T-cell (primary cell): ENCODE measurements at regions of chr15 and their contacts with region 1.

Region 1: DNA sequence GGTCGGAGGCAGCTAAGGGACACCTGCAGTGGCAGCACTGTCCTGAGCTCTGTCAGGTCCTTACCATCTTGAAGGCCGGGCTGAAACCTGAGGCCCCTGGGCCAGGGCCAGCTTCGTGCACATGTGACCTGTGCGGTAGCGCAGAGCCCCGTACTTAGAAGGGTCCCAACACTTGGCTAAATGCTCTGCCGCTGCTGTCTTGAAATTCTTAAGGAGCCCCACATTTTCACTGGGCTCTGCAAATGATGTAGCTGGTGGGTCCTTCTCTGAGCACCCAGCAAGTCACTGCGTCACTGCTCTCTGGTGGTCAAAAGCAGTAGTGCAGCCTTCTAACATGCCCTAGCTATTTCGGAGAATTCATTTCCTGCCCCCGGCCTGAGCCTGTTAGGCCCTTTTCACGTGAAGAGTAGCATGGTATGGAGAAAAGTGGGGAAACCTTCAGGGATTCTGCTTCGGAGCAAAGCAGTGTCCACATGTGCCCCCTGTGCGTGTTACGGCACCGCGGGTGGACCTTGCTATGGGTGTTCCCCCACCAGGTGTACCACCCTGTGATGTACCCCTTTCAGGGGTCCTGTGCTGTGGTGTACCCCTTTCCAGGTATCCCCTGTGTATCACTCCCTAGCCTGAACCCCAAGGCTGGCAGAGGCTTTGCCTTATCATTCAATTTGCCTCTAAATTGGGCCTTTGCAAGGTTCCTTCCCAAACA is 79.7 kb downstream of the TMEM266 start:
- DNase-seq: peak; percentile 32 to 76 (median 60)
- ATAC-seq: peak; percentile 73 to 87 (median 86)
- H3K4me3 ChIP-seq: no peak overlapping the region
- H3K4me3 Mint-ChIP-seq: no peak overlapping the region
- H3K27ac ChIP-seq: no peak overlapping the region
- H3K27ac Mint-ChIP-seq: no peak overlapping the region
- H3K4me1 ChIP-seq: peaks cover 0 to 8% of the 10 kb centered on the region in 2 experiments
- H3K4me1 Mint-ChIP-seq: peaks cover 0 to 4% (median 0%) of the 10 kb centered on the region in 3 donors
- H3K27me3 ChIP-seq: peaks cover 0 to 39% of the 10 kb centered on the region in 2 experiments
- H3K27me3 Mint-ChIP-seq: peaks cover 12 to 19% of the 10 kb centered on the region in 2 donors

Region 2: GRCh38 chr15:75809986-75810750 is 329.4 kb before region 1 on chr15:
- CTCF ChIA-PET with region 1: interaction called in 1 of 2 experiments, 10 read pairs
- POLR2A ChIA-PET with region 1: no interaction called
- DNase-seq: peak in 3 of 35 experiments; percentile 6 to 28 (median 20)
- ATAC-seq: peak in 1 of 4 experiments; percentile 44
- H3K4me3 ChIP-seq: no peak overlapping the region
- H3K4me3 Mint-ChIP-seq: no peak overlapping the region
- H3K27ac ChIP-seq: no peak overlapping the region
- H3K27ac Mint-ChIP-seq: no peak overlapping the region
- H3K4me1 ChIP-seq: no peaks in the 10 kb centered on the region
- H3K4me1 Mint-ChIP-seq: no peaks in the 10 kb centered on the region
- H3K27me3 ChIP-seq: peaks cover 0 to 10% of the 10 kb centered on the region in 2 experiments
- H3K27me3 Mint-ChIP-seq: peaks cover 4 to 5% of the 10 kb centered on the region in 2 donors

Region 3: GRCh38 chr15:76057332-76058000 is 82.1 kb before region 1 on chr15:
- CTCF ChIA-PET with region 1: interaction called, 7 to 29 read pairs
- POLR2A ChIA-PET with region 1: no interaction called
- DNase-seq: peak in 17 of 35 experiments; percentile 10 to 73 (median 31)
- ATAC-seq: peak in 1 of 4 experiments; percentile 34
- H3K4me3 ChIP-seq: no peak overlapping the region
- H3K4me3 Mint-ChIP-seq: peak overlapping the region in 1 of 3 donors; percentile 17
- H3K27ac ChIP-seq: no peak overlapping the region
- H3K27ac Mint-ChIP-seq: no peak overlapping the region
- H3K4me1 ChIP-seq: peaks cover 14 to 18% of the 10 kb centered on the region in 2 experiments
- H3K4me1 Mint-ChIP-seq: peaks cover 21 to 32% (median 23%) of the 10 kb centered on the region in 3 donors
- H3K27me3 ChIP-seq: peaks cover 14 to 38% of the 10 kb centered on the region in 2 experiments
- H3K27me3 Mint-ChIP-seq: peaks cover 47 to 58% of the 10 kb centered on the region in 2 donors